ENCODE measurements at regions of chr2 and their contacts with region 1.

Region 1: GRCh38 chr2:190534310-190535120 is at the start of gene NEMP2:
- DNase-seq: peak; percentile 75
- ATAC-seq: peak; percentile 82
- H3K4me3 ChIP-seq: peak within 1 kb of the TSS; percentile 91
- H3K27ac ChIP-seq: peak within 1 kb of the TSS; percentile 73
- H3K4me1 ChIP-seq: peaks cover 14% of the 10 kb centered on the region
- H3K27me3 ChIP-seq: no peaks in the 10 kb centered on the region
- CTCF ChIP-seq: no peak
- total RNA-seq, gene NEMP2: 2.5 and 3.8 TPM in 2 replicates

Region 2: GRCh38 chr2:190571686-190572085 is 37.2 kb after region 1 on chr2:
- CTCF ChIA-PET with region 1: no interaction called
- POLR2A ChIA-PET with region 1: interaction called, 6 read pairs
- intact Hi-C with region 1: loop called (anchors 2 kb)
- DNase-seq: peak; percentile 63
- ATAC-seq: peak; percentile 92
- H3K4me3 ChIP-seq: no peak overlapping the region
- H3K27ac ChIP-seq: peak overlapping the region; percentile 66
- H3K4me1 ChIP-seq: peaks cover 18% of the 10 kb centered on the region
- H3K27me3 ChIP-seq: no peaks in the 10 kb centered on the region
- CTCF ChIP-seq: no peak

Region 3: GRCh38 chr2:190578158-190579057 is 43.9 kb after region 1 on chr2:
- CTCF ChIA-PET with region 1: no interaction called
- POLR2A ChIA-PET with region 1: interaction called, 4 read pairs
- intact Hi-C with region 1: loop called (anchors 1 kb)
- DNase-seq: peak; percentile 93
- ATAC-seq: peak; percentile 86
- H3K4me3 ChIP-seq: peak overlapping the region; percentile 31
- H3K27ac ChIP-seq: peak overlapping the region; percentile 97
- H3K4me1 ChIP-seq: peaks cover 39% of the 10 kb centered on the region
- H3K27me3 ChIP-seq: no peaks in the 10 kb centered on the region
- CTCF ChIP-seq: no peak

Region 4: GRCh38 chr2:190759749-190760213 is 225.3 kb after region 1 on chr2:
- CTCF ChIA-PET with region 1: no interaction called
- POLR2A ChIA-PET with region 1: no interaction called
- intact Hi-C with region 1: loop called (anchors 10 kb)
- DNase-seq: peak; percentile 93
- ATAC-seq: peak; percentile 61
- H3K4me3 ChIP-seq: no peak overlapping the region
- H3K27ac ChIP-seq: 0 out of 2 replicates have a peak overlapping the region, but pooled peaks have one; percentile 23
- H3K4me1 ChIP-seq: peaks cover 23% of the 10 kb centered on the region
- H3K27me3 ChIP-seq: no peaks in the 10 kb centered on the region
- CTCF ChIP-seq: no peak

Measured in PC-3 (cell line).